Right ventricle myocardium superior (tissue), 1 donor: ENCODE measurements at regions of chr20 and their contacts with region 1.

Region 1: DNA sequence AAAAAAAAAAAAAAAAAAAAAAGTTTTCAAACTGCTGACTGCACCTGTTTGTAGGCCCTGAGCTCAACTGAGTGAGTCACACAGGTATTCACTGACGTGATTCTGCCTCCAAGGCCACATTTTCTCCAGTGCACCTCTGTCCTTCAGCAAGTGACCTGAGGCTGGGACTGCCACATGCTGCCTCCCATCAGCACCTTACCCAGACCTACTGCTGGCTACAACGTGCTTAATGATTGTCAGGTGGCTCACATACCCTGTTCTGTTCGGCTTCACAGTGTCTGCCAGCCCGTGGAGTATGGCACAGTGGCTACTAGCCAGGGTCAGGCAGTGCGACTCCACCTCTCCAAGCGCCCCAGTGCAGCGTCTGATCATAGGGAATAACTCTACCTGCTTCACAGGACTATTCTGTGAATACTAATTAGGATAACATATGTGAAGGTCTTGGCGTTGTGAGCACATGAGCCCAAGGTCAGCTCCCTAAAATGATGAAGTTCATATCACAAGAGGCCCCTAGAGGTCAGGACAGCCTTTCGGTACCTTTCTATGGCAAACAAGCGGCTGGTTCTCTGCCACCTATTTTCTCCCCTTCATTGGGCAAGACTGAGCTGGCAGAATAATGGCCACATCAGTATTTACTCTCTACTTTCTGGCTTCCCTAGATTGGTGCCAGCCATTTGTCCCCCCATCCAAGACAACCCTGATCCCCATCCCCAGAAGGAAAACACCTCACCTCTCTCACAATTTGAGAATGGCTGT is 28.1 kb downstream of the RIPOR3 start:
- DNase-seq: no peak
- ATAC-seq: peak; percentile 47

Region 2: DNA sequence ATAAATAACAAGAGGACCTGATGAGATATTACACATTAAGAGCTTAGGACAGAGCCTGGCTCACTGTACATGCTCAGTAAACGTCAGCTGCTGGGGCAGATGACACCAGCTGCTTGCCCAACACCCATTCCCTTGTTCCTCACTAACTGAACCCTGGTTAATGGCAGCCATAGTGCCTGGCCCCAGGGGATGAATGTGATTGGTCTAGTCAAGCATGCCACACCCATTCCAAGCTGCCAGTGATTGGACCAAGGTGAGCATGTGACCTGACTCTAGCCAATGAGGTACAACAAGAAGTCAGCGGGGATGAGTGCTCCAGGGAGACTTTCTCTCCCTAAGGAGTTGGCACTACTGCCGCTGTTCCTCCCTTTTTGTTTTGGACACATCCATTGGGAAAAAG is 238.2 kb before region 1 on chr20:
- intact Hi-C with region 1: no loop called
- DNase-seq: no peak
- ATAC-seq: no peak

Region 3: DNA sequence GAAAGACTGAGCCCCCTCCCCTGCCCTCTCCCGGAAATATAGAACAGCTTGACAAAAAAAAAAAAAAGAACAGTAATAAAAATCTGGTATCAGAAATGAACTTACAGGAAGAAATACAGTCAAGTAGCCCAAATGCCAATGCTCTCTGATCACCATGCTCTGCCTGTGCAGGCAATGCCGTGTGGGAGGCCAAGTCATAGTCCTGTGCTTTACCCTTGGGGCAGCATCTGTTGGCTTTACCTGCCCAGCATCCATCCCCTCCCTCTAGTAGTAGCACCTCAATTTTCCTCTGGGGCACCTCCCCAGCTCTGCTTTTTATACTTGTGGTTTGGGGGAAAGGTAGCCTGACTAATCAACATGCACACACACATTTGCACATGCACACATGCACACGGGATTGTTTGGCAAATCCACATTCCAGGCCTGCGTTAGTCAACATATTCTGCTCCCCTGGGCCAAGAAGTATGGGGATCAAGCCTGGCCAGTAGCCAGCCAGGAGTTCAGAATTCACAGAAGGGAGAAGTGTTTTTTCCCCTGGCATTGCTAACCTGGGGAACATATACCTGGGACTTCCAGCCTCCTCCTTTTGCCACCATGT is 42.1 kb before region 1 on chr20:
- intact Hi-C with region 1: no loop called
- DNase-seq: no peak
- ATAC-seq: no peak

Region 4: GRCh38 chr20:50750145-50750671 is 86.9 kb after region 1 on chr20:
- intact Hi-C with region 1: loop called (anchors 5 kb)
- DNase-seq: no peak
- ATAC-seq: no peak

Region 5: GRCh38 chr20:51121901-51122441 is 458.7 kb after region 1 on chr20:
- intact Hi-C with region 1: no loop called
- DNase-seq: no peak
- ATAC-seq: no peak